Activated CD4-positive, alpha-beta T cell treated with anti-CD3 and anti-CD28 coated beads for 36 hours (primary cell): ENCODE measurements at regions of chr2 and their contacts with region 1.

Region 1: DNA sequence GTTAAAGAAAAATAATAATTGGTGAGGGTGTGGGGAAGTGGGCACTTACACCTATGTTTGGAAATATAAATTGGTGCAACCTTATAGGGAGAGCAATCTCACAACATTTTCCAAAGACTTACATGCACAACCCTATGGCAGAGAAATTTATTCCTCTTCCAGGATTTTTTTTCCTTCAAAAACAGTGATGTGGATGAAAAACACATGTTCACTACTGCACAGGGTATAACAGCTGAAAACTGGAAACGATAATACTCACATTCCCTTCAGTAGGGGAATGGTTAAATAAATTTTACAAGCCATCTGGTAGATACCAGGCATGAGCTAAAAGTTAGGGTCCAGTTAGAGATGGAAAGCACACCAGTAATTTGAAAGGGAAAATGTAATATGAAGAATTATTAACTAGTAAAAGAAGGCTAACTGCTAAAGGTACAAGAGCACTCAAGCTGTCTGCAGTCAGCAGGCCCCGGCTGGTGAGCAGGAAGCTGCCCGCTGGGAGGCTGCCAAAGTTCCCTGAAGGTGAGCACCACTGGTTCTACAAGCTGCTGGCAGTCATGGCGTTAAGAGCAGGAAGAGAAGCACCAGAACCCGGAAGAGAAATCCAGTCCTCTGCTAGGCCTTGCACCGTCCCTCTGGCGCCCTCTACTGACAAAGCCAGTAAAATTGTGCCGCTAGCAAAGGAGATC is 28.4 kb upstream of the CASP8 start:
- DNase-seq: peak; percentile 96
- ATAC-seq: peak; percentile 47
- H3K4me3 Mint-ChIP-seq: peak overlapping the region; percentile 68
- H3K27ac Mint-ChIP-seq: peak overlapping the region; percentile 78
- H3K4me1 Mint-ChIP-seq: peaks cover 49% of the 10 kb centered on the region
- H3K27me3 Mint-ChIP-seq: no peaks in the 10 kb centered on the region

Region 2: GRCh38 chr2:200787348-200788120 is 444.4 kb before region 1 on chr2:
- CTCF ChIA-PET with region 1: no interaction called
- POLR2A ChIA-PET with region 1: no interaction called
- intact Hi-C with region 1: no loop called
- DNase-seq: peak; percentile 32
- ATAC-seq: peak; percentile 83
- H3K4me3 Mint-ChIP-seq: no peak overlapping the region
- H3K27ac Mint-ChIP-seq: peak overlapping the region; percentile 4
- H3K4me1 Mint-ChIP-seq: peaks cover 13% of the 10 kb centered on the region
- H3K27me3 Mint-ChIP-seq: peaks cover 5% of the 10 kb centered on the region

Region 3: GRCh38 chr2:200901459-200902072 is 330.4 kb before region 1 on chr2:
- CTCF ChIA-PET with region 1: interaction called, 18 read pairs
- POLR2A ChIA-PET with region 1: no interaction called
- intact Hi-C with region 1: loop called (anchors 1 to 2 kb)
- DNase-seq: peak; percentile 83
- ATAC-seq: peak; percentile 100
- H3K4me3 Mint-ChIP-seq: no peak overlapping the region
- H3K27ac Mint-ChIP-seq: peak overlapping the region; percentile 73
- H3K4me1 Mint-ChIP-seq: peaks cover 2% of the 10 kb centered on the region
- H3K27me3 Mint-ChIP-seq: no peaks in the 10 kb centered on the region

Region 4: DNA sequence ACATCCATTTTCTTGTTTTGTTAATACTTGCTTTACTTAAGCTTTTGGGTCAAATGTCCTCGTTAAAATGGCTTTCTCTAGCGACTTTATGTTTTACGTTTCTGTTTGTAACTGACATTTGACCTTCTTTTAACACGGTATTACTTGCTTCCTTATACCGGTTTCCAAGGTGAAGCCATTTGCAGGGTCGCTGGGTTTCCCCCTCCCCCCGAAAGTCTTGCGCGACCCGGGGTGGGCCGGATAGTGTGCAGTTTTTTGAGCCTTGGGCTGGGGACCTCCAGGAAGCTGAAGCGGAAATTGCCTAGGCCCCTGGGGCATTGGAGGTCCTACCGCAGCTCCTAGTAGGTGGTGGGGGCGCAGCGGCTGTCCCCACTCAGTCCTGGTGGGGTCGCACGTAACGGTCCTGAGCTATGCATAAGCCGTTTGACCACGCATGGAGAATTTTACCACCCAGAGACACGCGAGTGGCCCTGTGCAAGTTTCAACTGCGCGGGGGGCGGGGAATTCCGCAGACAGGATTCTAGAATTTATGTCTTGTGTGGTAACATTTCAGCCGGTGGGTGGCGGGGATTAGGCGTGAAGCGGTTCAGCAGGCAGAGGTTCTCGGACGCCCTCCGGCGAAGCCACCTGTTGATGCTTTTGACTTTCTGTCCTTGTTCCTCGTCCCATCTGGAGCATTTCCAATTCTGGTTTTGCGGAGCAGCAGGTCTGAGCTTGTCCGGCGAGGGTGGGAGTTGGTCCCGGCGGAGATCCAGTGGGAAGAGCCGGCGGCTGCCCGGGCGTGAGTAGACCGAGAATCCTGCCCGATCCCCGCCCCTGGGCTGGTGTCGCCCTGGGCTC is 113.6 kb before region 1 on chr2:
- CTCF ChIA-PET with region 1: interaction called, 31 read pairs
- POLR2A ChIA-PET with region 1: interaction called, 6 read pairs
- intact Hi-C with region 1: loop called in 1 of 2 experiments (anchors 1 kb)
- DNase-seq: peak; percentile 94
- ATAC-seq: peak; percentile 37
- H3K4me3 Mint-ChIP-seq: peak overlapping the region; percentile 98
- H3K27ac Mint-ChIP-seq: peak overlapping the region; percentile 100
- H3K4me1 Mint-ChIP-seq: peaks cover 42% of the 10 kb centered on the region
- H3K27me3 Mint-ChIP-seq: no peaks in the 10 kb centered on the region

Region 5: DNA sequence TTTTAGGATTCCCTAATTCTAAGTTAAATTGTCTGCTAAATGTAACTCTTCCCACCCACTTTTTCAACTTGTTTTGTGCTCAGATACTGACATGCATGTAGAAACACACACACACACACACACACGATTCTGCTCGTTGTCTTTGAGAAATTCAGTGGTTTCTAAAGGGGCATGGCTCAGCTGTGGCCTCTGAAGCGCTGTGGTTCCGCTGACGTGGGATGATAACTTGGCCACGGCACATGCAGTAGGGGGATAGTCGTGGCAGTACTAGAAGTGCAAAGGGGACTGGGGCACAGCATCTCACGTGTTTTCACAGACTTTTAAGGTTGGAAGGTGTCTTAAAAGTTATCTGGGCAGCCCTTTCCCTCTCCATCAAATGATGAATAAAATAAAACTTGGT is 30.6 kb before region 1 on chr2:
- CTCF ChIA-PET with region 1: interaction called, 36 read pairs
- POLR2A ChIA-PET with region 1: interaction called, 6 read pairs
- intact Hi-C with region 1: no loop called
- DNase-seq: no peak
- ATAC-seq: no peak
- H3K4me3 Mint-ChIP-seq: no peak overlapping the region
- H3K27ac Mint-ChIP-seq: no peak overlapping the region
- H3K4me1 Mint-ChIP-seq: peaks cover 23% of the 10 kb centered on the region
- H3K27me3 Mint-ChIP-seq: no peaks in the 10 kb centered on the region

Region 6: DNA sequence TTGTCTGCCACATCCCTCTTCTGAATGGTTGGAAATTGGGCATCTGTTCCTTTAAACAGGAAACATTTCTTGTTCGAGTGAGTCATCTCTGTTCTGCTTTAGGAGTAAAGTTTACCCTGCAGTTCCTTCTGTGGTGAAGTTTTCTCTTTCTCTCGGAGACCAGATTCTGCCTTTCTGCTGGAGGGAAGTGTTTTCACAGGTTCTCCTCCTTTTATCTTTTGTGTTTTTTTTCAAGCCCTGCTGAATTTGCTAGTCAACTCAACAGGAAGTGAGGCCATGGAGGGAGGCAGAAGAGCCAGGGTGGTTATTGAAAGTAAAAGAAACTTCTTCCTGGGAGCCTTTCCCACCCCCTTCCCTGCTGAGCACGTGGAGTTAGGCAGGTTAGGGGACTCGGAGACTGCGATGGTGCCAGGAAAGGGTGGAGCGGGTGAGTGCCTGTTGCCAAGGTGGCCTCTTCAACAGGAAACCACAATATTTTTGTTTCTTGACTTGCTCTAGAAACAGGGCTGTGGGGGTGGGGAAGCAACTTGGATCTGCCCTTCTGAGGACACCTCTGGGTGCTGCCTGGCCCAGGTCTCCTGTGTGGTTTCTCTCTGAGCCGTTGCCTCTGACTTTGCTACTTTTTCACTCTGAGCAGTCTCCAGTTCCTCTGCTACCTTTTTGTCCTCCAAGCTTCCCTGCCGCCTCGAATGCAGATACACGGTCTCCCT is 26.2 kb after region 1 on chr2:
- CTCF ChIA-PET with region 1: interaction called, 52 read pairs
- POLR2A ChIA-PET with region 1: interaction called, 7 read pairs
- intact Hi-C with region 1: loop called (anchors 1 kb)
- DNase-seq: peak; percentile 96
- ATAC-seq: peak; percentile 66
- H3K4me3 Mint-ChIP-seq: peak overlapping the region; percentile 79
- H3K27ac Mint-ChIP-seq: peak overlapping the region; percentile 98
- H3K4me1 Mint-ChIP-seq: peaks cover 76% of the 10 kb centered on the region
- H3K27me3 Mint-ChIP-seq: no peaks in the 10 kb centered on the region

Region 7: DNA sequence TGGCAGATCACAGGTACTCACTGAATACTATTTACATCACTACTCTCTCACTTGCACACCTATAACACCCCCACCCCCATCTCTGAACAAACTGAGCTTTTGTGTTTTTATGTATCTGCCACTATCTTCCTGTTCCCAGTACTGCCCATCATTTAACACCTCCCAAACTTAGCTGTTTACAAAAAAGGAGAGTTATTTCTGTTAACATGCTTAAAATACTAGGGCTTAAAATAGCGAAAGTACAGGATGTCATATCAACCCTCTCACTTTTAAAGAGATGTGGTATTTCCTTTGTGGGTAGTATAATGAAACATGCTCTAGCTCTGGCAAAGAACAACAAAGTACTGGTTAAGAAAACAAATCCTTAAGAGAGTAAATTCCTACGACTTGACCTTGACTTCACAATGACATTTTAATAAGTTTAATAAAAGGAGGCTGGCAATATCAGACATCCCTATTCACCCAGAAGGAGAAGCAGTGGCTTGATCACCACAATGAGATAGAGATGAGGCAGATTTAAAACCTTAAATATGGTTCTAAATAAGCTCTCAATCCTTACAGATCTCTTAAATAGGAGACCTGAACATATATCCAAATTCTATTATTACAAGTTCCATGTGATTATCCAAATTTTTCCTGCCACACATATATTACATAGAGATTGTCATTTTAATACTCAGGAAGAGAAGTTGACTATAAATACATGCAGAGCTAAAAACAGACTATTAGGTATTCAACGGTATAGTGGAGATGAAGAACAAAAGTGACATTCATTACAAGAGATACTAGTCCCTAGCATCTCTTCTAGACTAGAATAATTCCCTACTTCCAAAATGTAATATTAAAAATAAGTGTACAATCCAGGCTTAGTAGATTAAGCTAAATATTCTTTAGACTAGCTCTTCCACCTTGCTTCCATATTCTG is 182.4 kb after region 1 on chr2:
- CTCF ChIA-PET with region 1: interaction called, 10 read pairs
- POLR2A ChIA-PET with region 1: no interaction called
- intact Hi-C with region 1: no loop called
- DNase-seq: no peak
- ATAC-seq: peak; percentile 82
- H3K4me3 Mint-ChIP-seq: no peak overlapping the region
- H3K27ac Mint-ChIP-seq: no peak overlapping the region
- H3K4me1 Mint-ChIP-seq: peaks cover 20% of the 10 kb centered on the region
- H3K27me3 Mint-ChIP-seq: no peaks in the 10 kb centered on the region

Region 8: DNA sequence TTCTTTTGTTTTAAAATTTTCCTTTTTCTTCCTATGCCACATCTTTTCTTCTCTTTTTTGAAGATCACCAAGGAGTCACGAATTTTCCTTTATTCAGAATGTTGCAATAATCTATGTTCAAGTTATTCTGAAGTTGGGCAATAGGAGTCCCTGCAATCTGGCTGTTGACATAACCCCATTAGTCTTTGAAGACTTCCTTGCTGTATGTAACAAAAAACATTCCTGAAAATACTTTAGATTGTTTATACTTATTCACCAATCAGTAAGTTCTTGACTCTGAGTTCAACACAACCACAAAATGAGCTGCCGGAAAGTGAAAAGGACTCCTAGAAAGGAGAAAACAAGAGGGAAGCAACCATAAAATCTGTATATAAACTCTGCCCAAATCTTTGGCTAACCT is 348.6 kb after region 1 on chr2:
- CTCF ChIA-PET with region 1: no interaction called
- POLR2A ChIA-PET with region 1: no interaction called
- intact Hi-C with region 1: no loop called
- DNase-seq: no peak
- ATAC-seq: no peak
- H3K4me3 Mint-ChIP-seq: no peak overlapping the region
- H3K27ac Mint-ChIP-seq: no peak overlapping the region
- H3K4me1 Mint-ChIP-seq: no peaks in the 10 kb centered on the region
- H3K27me3 Mint-ChIP-seq: no peaks in the 10 kb centered on the region

Region 9: GRCh38 chr2:202033321-202034248 is 801.7 kb after region 1 on chr2 and contains the start of gene FZD7:
- CTCF ChIA-PET with region 1: no interaction called
- POLR2A ChIA-PET with region 1: no interaction called
- intact Hi-C with region 1: loop called in 1 of 2 experiments (anchors 1 kb)
- DNase-seq: peak; percentile 91
- ATAC-seq: peak; percentile 83
- H3K4me3 Mint-ChIP-seq: peak within 1 kb of the TSS; percentile 72
- H3K27ac Mint-ChIP-seq: peak within 1 kb of the TSS; percentile 22
- H3K4me1 Mint-ChIP-seq: peaks cover 13% of the 10 kb centered on the region
- H3K27me3 Mint-ChIP-seq: peaks cover 21% of the 10 kb centered on the region
- total RNA-seq, gene FZD7: 0.58 to 0.94 TPM

Region 10: GRCh38 chr2:202950592-202950991 is 1718.7 kb after region 1 on chr2:
- CTCF ChIA-PET with region 1: no interaction called
- POLR2A ChIA-PET with region 1: no interaction called
- intact Hi-C with region 1: no loop called
- DNase-seq: no peak
- ATAC-seq: peak; percentile 30
- H3K4me3 Mint-ChIP-seq: no peak overlapping the region
- H3K27ac Mint-ChIP-seq: no peak overlapping the region
- H3K4me1 Mint-ChIP-seq: peaks cover 2% of the 10 kb centered on the region
- H3K27me3 Mint-ChIP-seq: no peaks in the 10 kb centered on the region